ENCODE measurements at regions of chr5 and their contacts with region 1.

Region 1: DNA sequence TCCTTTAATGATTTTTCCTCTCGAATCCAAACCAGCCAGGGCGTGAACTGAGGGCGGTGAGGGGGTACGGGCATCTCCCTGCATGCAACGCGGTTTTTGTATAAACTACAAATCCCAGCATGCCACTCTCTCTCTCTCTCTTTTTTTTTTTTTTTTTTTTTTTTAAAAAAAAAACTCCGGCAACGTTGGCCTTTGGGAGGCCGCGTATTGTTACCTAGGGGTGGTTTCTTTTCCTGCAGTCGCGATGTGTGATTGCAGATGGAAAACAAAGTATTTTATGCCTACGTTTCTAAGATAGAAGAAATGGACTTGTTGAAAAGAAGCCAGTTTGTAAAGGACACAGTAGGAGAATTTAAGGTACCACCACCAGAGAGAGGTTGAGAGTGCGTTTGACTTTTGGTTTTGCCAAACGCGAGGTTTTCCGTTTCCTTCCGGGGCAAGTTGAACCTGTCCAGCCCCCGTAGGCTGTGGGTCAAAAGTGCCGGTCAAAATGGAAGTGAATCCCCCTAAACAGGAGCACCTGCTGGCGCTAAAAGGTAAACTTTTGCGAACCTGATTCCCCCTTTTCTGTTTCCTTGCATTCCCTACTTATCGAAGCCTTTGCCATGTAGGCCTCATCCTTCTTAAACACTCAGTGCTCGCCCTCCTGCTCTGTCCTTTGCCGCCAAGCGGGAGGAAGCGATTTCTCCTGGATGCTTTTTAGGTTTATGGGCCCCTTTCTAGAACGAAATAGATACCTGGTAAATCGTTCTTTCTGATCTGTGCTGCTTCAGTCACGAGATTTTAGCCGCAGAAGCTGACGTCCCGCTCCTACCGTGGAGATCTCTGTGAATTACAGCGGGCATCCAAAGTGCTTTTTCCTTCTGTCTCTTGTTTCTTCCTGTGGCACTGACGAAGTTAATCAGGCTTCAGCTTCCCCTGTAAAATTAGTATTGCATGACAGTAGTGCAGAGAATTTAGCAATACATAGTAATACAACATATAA is at the starts of genes SHLD3 and TRAPPC13:
- DNase-seq: peak; percentile 89
- H3K4me3 Mint-ChIP-seq: peak within 1 kb of the TSS; percentile 96
- H3K27ac Mint-ChIP-seq: peak within 1 kb of the TSS; percentile 96
- H3K4me1 Mint-ChIP-seq: peaks cover 39% of the 10 kb centered on the region
- H3K27me3 Mint-ChIP-seq: no peaks in the 10 kb centered on the region
- total RNA-seq, gene SHLD3: 2.6 to 3.1 TPM
- total RNA-seq, gene TRAPPC13: 22.4 to 23.2 TPM

Region 2: DNA sequence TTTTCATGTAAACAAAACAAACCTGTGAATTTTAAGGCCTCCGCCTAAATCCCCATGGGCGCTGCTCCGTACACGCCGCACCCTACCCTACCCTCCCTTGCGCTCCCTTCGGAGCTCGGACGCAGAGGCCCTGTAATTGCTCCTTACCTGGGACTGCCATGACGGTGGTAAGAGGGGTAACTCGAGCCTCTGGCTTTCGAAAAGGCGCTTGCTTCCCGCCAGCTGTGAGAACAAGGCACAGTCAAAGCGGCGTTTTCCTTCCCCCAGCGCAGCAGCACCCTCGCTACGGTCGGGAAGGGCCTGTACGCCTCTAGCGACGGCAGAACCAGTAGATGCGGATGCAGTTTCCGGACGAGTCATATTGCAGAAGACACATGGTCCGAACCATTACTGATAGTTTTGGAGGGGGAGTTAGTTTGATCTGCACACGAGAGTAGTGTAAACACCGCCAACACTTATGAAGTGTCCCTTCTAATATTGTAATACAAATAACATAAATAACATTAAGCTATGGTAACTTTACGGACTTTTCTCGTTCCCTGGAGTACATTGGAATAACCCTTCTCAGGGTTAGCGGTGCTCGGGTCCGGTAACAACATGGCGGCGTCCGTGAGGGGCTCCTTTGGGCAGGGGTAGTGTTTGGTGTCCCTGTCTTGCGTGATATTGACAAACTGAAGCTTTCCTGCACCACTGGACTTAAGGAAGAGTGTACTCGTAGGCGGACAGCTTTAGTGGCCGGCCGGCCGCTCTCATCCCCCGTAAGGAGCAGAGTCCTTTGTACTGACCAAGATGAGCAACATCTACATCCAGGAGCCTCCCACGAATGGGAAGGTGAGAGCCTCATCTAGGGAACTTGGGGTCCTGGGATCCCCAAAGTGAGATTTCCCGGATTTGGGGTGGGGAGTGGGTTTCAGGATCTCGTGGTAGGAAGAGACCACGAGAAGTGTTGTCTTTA is 856.2 kb before region 1 on chr5 and contains the starts of genes CWC27 and SREK1IP1:
- CTCF ChIA-PET with region 1: no interaction called
- POLR2A ChIA-PET with region 1: no interaction called
- intact Hi-C with region 1: loop called (anchors 1 kb)
- DNase-seq: peak; percentile 89
- H3K4me3 Mint-ChIP-seq: peak within 1 kb of the TSS; percentile 100
- H3K27ac Mint-ChIP-seq: peak within 1 kb of the TSS; percentile 94
- H3K4me1 Mint-ChIP-seq: peaks cover 43% of the 10 kb centered on the region
- H3K27me3 Mint-ChIP-seq: no peaks in the 10 kb centered on the region
- total RNA-seq, gene CWC27: 31.4 to 33.7 TPM
- total RNA-seq, gene SREK1IP1: 20.2 to 24.3 TPM

Region 3: GRCh38 chr5:65562731-65563701 is 61.8 kb before region 1 on chr5 and contains the starts of genes CENPK and PPWD1:
- CTCF ChIA-PET with region 1: no interaction called
- POLR2A ChIA-PET with region 1: interaction called, 19 read pairs
- intact Hi-C with region 1: loop called (anchors 1 kb)
- DNase-seq: peak; percentile 98
- H3K4me3 Mint-ChIP-seq: peak within 1 kb of the TSS; percentile 92
- H3K27ac Mint-ChIP-seq: peak within 1 kb of the TSS; percentile 93
- H3K4me1 Mint-ChIP-seq: peaks cover 45% of the 10 kb centered on the region
- H3K27me3 Mint-ChIP-seq: no peaks in the 10 kb centered on the region
- total RNA-seq, gene CENPK: 79.7 to 87.5 TPM
- total RNA-seq, gene PPWD1: 38.0 to 42.2 TPM

Region 4: GRCh38 chr5:65577141-65577540 is 47.7 kb before region 1 on chr5:
- CTCF ChIA-PET with region 1: no interaction called
- POLR2A ChIA-PET with region 1: no interaction called
- intact Hi-C with region 1: no loop called
- DNase-seq: no peak
- H3K4me3 Mint-ChIP-seq: no peak overlapping the region
- H3K27ac Mint-ChIP-seq: peak overlapping the region; percentile 55
- H3K4me1 Mint-ChIP-seq: peaks cover 18% of the 10 kb centered on the region
- H3K27me3 Mint-ChIP-seq: no peaks in the 10 kb centered on the region

Region 5: DNA sequence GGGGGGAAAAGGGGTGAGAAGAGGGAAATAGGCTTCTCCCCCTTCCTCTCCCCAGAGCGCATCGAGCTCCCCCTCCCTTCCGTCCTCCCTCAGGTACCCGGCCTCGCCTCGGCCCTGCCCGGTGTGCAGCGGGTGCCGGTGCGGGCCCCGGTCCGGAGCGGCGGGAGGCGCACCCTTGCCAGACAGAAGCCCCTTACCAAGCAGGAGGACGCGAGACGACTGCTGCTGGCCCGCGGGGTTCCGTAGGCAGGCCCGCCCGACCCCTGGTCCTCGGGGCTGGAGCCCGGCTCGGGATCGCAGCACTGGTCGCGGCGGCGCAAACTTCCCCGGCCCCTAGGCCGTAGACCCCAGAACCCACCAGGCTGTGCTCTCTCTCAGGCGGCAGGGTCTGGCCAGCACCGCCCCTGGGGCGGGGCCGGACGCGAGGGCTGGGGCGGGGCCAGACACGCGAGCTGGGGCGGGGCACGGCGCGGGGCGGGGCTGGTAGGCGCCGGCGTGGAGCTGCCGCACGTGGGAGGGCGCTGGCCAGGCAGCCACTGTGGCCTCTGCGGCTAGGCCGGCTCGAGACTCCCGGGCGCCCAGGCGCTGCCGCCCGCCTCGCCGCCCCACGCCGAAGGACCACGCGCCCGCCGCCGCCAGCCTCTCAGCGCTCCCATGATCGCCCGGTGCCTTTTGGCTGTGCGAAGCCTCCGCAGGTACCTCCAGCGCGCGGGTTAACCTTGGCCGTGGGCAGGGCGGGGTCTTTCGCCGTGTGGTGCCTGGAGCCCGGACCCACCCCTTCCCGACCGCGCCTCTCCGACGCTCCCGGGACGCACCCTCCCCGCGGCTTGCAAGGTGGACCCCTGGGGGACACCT is 97.1 kb after region 1 on chr5 and contains the starts of genes NLN and SGTB:
- CTCF ChIA-PET with region 1: no interaction called
- POLR2A ChIA-PET with region 1: interaction called, 4 read pairs
- intact Hi-C with region 1: loop called (anchors 1 kb)
- DNase-seq: peak; percentile 88
- H3K4me3 Mint-ChIP-seq: peak within 1 kb of the TSS; percentile 89
- H3K27ac Mint-ChIP-seq: peak within 1 kb of the TSS; percentile 91
- H3K4me1 Mint-ChIP-seq: peaks cover 25% of the 10 kb centered on the region
- H3K27me3 Mint-ChIP-seq: no peaks in the 10 kb centered on the region
- total RNA-seq, gene NLN: 22.7 to 23.7 TPM
- total RNA-seq, gene SGTB: 16.5 to 16.7 TPM

Region 6: GRCh38 chr5:66010476-66010875 is 385.6 kb after region 1 on chr5:
- CTCF ChIA-PET with region 1: no interaction called
- POLR2A ChIA-PET with region 1: no interaction called
- intact Hi-C with region 1: loop called (anchors 10 kb)
- DNase-seq: no peak
- H3K4me3 Mint-ChIP-seq: no peak overlapping the region
- H3K27ac Mint-ChIP-seq: peak overlapping the region; percentile 51
- H3K4me1 Mint-ChIP-seq: peaks cover 43% of the 10 kb centered on the region
- H3K27me3 Mint-ChIP-seq: no peaks in the 10 kb centered on the region